Adrenal gland (tissue), 19 donors: ENCODE measurements at regions of chr12 and their contacts with region 1.

Region 1: DNA sequence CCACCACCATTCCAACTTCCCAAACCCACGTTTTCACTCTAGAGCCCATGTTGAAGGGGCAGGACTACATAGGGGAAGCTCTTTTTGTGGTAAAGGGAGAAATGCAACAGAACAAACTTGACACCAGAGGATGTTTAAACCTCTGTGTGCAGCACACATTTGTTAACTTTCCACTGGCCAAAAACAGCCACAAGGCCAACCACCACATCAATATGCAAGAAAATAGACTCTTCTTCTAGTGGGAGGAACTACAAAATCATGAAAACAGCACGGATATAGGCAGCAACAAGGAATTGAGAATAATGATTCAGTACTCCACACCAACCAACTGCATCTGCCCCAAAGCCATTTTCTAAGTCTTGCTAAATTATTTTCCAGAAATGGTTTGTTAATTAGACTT is 66.3 kb upstream of the CEP83 start:
- DNase-seq: no peak
- H3K4me3 ChIP-seq: no peak overlapping the region
- H3K27ac ChIP-seq: no peak overlapping the region
- H3K4me1 ChIP-seq: no peaks in the 10 kb centered on the region
- H3K27me3 ChIP-seq: no peaks in the 10 kb centered on the region
- CTCF ChIP-seq: no peak
- POLR2A ChIP-seq: no peak

Region 2: GRCh38 chr12:94289461-94290312 is 236.3 kb before region 1 on chr12:
- intact Hi-C with region 1: loop called in 1 of 2 experiments (anchors 10 kb)
- DNase-seq: peak in 6 of 7 donors; percentile 38 to 71 (median 58)
- H3K4me3 ChIP-seq: no peak overlapping the region
- H3K27ac ChIP-seq: peak overlapping the region in 3 of 5 donors; percentile 13 to 68 (median 45)
- H3K4me1 ChIP-seq: peaks cover 4 to 17% of the 10 kb centered on the region in 2 donors
- H3K27me3 ChIP-seq: no peaks in the 10 kb centered on the region
- CTCF ChIP-seq: no peak
- POLR2A ChIP-seq: no peak